Tibial artery (tissue), 4 donors: ENCODE measurements at regions of chr10 and their contacts with region 1.

Region 1: DNA sequence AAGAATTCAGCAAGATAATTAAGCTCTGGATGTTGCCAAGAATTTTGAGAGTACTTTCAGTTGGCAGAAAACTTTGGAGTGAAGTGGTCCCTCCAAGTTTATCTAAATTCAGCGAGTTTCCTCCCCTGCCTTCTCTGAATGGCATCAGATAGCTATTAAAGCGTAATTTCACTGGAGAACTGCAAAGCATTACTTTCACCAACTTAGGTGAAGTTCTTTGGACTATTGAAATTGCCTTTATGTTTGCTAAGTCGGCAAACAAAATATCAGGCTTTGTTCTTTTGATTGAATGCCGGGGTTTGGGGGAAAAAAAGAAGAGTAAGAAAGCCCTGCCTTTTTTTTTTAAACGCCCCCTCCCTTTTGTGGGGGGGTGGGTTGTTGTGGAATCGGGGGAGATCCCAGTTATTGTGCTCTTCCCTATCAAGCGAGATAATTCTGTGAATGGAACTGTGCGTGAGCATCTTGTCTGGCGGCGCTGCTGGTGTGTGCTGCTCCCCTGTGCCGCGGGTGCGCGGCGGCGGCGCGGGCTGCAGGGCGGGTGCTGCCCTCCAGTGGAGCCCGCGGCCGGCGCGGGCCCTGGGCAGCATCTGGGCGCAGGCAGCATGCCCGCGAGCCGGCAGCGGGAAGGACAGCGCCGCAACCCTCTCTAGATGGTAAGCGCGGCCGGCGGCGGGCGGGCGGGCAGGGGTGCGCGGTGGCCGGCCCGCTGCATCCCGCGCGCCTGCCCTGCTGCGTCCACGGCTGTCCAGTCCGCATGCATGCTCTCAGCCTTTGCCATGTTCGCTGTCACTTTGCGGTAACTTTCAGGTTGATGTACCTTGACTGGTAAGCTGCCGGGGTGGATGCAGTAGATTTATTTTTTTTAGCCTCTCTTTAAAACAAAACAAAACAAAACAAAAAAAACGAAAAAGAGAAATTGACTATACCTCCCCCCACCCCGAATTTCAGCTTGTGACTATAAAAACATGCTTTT is 176.5 kb downstream of the TCF7L2 start:
- DNase-seq: peak; percentile 70 to 83
- H3K4me3 ChIP-seq: peak overlapping the region; percentile 29 to 44
- H3K27ac ChIP-seq: peak overlapping the region in 1 of 2 donors; percentile 24
- H3K4me1 ChIP-seq: peaks cover 0 to 62% (median 16%) of the 10 kb centered on the region in 4 donors
- H3K27me3 ChIP-seq: no peaks in the 10 kb centered on the region
- CTCF ChIP-seq: peak; percentile 70 to 79

Region 2: DNA sequence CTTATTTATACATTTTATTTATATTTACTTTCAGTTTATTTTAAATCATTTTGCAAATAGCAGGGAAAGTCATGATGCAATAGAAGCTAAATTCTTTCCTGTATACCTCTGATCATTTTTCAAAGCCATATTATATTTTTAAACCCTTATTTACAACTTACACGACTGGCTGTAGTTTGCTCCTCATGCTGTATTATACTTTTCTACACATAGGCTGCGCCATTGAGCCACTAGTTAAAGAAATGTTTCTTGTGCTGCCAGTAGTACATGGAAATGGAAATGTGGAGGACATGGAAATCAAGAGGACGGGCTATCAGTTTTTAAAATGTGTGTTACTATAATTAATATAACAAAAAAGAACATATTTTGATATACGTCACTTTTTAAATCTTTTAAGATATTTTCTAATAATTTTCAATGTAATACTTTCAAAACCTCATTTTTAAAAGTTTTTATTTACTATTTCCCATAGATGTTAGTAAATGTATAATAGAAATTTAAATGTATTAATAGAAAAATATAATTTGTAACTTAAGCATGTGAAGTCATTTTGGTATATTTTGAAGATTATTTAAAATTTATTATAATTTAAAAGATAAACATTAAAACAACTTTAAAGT is 561.0 kb before region 1 on chr10:
- intact Hi-C with region 1: loop called (anchors 10 kb)
- DNase-seq: peak in 1 of 2 donors; percentile 23
- H3K4me3 ChIP-seq: no peak overlapping the region
- H3K27ac ChIP-seq: no peak overlapping the region
- H3K4me1 ChIP-seq: peaks cover 0 to 5% (median 0%) of the 10 kb centered on the region in 4 donors
- H3K27me3 ChIP-seq: no peaks in the 10 kb centered on the region
- CTCF ChIP-seq: peak; percentile 65 to 68

Region 3: GRCh38 chr10:112716924-112717413 is 409.5 kb before region 1 on chr10:
- intact Hi-C with region 1: loop called (anchors 5 kb)
- DNase-seq: no peak
- H3K4me3 ChIP-seq: no peak overlapping the region
- H3K27ac ChIP-seq: peak overlapping the region in 1 of 2 donors; percentile 21
- H3K4me1 ChIP-seq: peaks cover 0 to 13% (median 4%) of the 10 kb centered on the region in 4 donors
- H3K27me3 ChIP-seq: no peaks in the 10 kb centered on the region
- CTCF ChIP-seq: no peak

Region 4: DNA sequence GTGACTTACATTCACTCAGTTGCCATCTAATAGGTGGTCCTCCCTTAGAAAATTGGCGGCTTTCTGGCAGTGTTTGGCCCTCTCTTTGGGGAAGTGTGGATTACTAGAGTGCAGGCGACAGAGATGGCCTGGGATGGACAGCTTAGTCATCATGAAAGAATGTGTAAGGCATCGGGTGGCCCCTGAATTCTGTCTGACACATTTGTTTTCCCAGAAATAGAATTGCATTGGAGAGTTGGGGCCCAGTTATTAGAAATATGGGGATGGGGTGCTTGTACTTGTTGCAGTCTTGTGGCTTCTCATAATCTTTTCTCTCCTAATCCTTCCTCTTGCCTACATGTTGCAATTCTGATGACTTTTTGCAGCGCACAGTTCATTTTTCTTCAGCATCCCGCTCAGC is 162.7 kb before region 1 on chr10:
- intact Hi-C with region 1: loop called (anchors 10 kb)
- DNase-seq: no peak
- H3K4me3 ChIP-seq: no peak overlapping the region
- H3K27ac ChIP-seq: peak overlapping the region; percentile 32 to 64
- H3K4me1 ChIP-seq: peaks cover 0 to 87% (median 38%) of the 10 kb centered on the region in 4 donors
- H3K27me3 ChIP-seq: no peaks in the 10 kb centered on the region
- CTCF ChIP-seq: no peak

Region 5: DNA sequence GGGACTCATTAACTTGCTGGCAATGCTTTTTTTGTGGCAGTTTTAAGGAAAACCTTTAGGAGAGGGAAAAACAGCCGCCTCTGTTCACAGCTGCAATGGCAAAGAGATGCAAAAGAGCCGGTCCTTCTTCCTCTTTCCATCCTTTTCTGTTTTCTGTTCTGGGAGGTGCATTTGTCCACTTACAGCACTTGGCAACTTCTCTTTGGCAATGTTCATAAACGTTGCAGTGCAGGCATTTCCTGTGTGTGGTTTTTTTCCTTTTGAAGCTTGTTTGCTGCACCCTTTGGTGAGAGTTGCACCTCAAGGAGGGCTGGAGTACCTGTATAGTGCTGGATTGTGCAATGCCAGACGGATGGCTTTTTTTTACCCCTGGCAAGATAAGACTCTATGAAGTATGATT is 372.5 kb after region 1 on chr10:
- intact Hi-C with region 1: no loop called
- DNase-seq: no peak
- H3K4me3 ChIP-seq: no peak overlapping the region
- H3K27ac ChIP-seq: no peak overlapping the region
- H3K4me1 ChIP-seq: peaks cover 0 to 47% (median 34%) of the 10 kb centered on the region in 4 donors
- H3K27me3 ChIP-seq: no peaks in the 10 kb centered on the region
- CTCF ChIP-seq: no peak